ENCODE measurements at regions of chr11 and their contacts with region 1.

Region 1: GRCh38 chr11:72430741-72431570 is 3.4 kb downstream of the CLPB start:
- DNase-seq: peak; percentile 64
- ATAC-seq: peak; percentile 42
- H3K4me3 Mint-ChIP-seq: peak overlapping the region; percentile 14
- H3K27ac Mint-ChIP-seq: peak overlapping the region; percentile 68
- H3K4me1 Mint-ChIP-seq: peaks cover 29% of the 10 kb centered on the region
- H3K27me3 Mint-ChIP-seq: no peaks in the 10 kb centered on the region

Region 2: GRCh38 chr11:71928737-71929452 is 502.1 kb before region 1 on chr11 and contains the start of gene RNF121:
- CTCF ChIA-PET with region 1: interaction called, 4 read pairs
- POLR2A ChIA-PET with region 1: no interaction called
- intact Hi-C with region 1: loop called in 1 of 2 experiments (anchors 1 kb)
- DNase-seq: peak; percentile 99
- ATAC-seq: peak; percentile 87
- H3K4me3 Mint-ChIP-seq: peak within 1 kb of the TSS; percentile 96
- H3K27ac Mint-ChIP-seq: peak within 1 kb of the TSS; percentile 100
- H3K4me1 Mint-ChIP-seq: peaks cover 50% of the 10 kb centered on the region
- H3K27me3 Mint-ChIP-seq: no peaks in the 10 kb centered on the region
- total RNA-seq, gene RNF121: 28.7 to 29.5 TPM

Region 3: DNA sequence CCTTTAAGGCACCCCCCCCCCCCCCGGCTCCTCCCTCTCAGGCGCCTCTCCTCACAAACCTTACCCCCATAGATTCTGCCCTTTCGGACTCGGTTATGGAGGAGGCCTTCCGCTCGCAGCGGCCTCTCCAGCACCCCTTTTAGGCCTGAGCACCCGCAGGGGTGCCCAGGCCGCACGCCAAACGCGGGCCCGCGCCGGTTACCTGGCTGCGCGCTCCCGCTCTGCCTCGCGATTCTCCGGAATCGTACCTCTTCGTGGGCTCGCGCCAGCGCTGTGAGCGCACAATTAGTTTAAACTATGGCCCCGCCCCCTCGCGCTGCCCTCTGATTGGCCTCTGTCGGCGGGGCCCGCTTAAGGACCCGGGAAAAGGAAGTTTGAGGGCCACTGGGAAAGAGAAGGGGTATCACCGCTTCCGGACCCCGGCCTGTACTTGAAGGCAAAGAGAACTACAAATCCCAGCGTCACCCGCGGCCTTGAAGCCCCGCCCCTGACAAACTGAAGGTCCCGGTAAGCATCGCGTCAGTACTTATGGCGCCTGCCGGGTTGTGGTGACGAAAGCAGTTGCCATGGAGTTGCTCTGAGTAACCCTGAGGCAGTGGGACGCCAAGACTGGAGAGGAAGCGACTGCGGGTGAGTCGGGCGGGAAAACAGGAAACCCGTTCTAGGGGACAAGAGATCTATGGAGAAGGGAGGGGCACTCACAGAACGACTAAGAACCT is 350.5 kb before region 1 on chr11 and contains the starts of genes LRRC51 and NUMA1:
- CTCF ChIA-PET with region 1: interaction called, 3 read pairs
- POLR2A ChIA-PET with region 1: no interaction called
- intact Hi-C with region 1: loop called (anchors 1 kb)
- DNase-seq: peak; percentile 100
- ATAC-seq: peak; percentile 96
- H3K4me3 Mint-ChIP-seq: peak within 1 kb of the TSS; percentile 91
- H3K27ac Mint-ChIP-seq: peak within 1 kb of the TSS; percentile 94
- H3K4me1 Mint-ChIP-seq: peaks cover 37% of the 10 kb centered on the region
- H3K27me3 Mint-ChIP-seq: no peaks in the 10 kb centered on the region
- total RNA-seq, gene LRRC51: 7.7 to 11.6 TPM
- total RNA-seq, gene NUMA1: 154 to 167 TPM

Region 4: GRCh38 chr11:72238040-72238450 is 192.9 kb before region 1 on chr11:
- CTCF ChIA-PET with region 1: interaction called, 6 read pairs
- POLR2A ChIA-PET with region 1: no interaction called
- intact Hi-C with region 1: loop called in 1 of 2 experiments (anchors 5 kb)
- DNase-seq: peak; percentile 78
- ATAC-seq: peak; percentile 76
- H3K4me3 Mint-ChIP-seq: no peak overlapping the region
- H3K27ac Mint-ChIP-seq: no peak overlapping the region
- H3K4me1 Mint-ChIP-seq: peaks cover 11% of the 10 kb centered on the region
- H3K27me3 Mint-ChIP-seq: peaks cover 32% of the 10 kb centered on the region

Region 5: GRCh38 chr11:72352859-72353551 is 78.0 kb before region 1 on chr11:
- CTCF ChIA-PET with region 1: interaction called, 12 read pairs
- POLR2A ChIA-PET with region 1: interaction called, 4 read pairs
- intact Hi-C with region 1: loop called (anchors 5 kb)
- DNase-seq: peak; percentile 47
- ATAC-seq: peak; percentile 96
- H3K4me3 Mint-ChIP-seq: no peak overlapping the region
- H3K27ac Mint-ChIP-seq: no peak overlapping the region
- H3K4me1 Mint-ChIP-seq: no peaks in the 10 kb centered on the region
- H3K27me3 Mint-ChIP-seq: no peaks in the 10 kb centered on the region

Region 6: DNA sequence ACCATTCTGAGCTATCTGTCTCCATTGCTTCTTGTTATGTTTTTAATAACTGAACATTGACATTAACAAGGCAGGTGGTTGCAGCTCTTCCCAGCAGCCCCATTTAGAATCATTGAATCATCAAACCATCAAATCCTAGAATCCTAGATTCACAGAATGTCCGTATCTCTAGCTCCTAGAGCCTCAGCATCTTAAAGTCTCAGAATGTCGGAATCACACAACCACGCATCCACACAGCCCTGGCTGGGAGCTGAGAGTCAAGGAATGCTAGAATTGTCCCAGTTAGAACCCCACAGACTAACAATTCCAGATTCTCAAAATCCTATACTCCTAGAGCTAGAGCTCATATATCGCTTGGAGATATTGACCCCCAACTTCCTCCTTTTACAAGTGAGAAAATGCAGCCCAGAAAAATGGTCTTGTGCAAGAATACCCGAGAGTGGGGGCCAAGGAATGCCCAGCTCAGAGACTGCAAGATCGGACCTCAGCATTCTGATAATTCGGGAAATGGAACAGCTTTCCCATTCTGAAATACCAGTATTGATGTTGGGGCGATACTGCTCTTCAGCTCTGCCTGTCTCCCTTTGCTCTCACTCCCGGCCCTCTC is 204.5 kb after region 1 on chr11:
- CTCF ChIA-PET with region 1: no interaction called
- POLR2A ChIA-PET with region 1: no interaction called
- intact Hi-C with region 1: no loop called
- DNase-seq: no peak
- ATAC-seq: no peak
- H3K4me3 Mint-ChIP-seq: no peak overlapping the region
- H3K27ac Mint-ChIP-seq: no peak overlapping the region
- H3K4me1 Mint-ChIP-seq: no peaks in the 10 kb centered on the region
- H3K27me3 Mint-ChIP-seq: peaks cover 2% of the 10 kb centered on the region

Region 7: DNA sequence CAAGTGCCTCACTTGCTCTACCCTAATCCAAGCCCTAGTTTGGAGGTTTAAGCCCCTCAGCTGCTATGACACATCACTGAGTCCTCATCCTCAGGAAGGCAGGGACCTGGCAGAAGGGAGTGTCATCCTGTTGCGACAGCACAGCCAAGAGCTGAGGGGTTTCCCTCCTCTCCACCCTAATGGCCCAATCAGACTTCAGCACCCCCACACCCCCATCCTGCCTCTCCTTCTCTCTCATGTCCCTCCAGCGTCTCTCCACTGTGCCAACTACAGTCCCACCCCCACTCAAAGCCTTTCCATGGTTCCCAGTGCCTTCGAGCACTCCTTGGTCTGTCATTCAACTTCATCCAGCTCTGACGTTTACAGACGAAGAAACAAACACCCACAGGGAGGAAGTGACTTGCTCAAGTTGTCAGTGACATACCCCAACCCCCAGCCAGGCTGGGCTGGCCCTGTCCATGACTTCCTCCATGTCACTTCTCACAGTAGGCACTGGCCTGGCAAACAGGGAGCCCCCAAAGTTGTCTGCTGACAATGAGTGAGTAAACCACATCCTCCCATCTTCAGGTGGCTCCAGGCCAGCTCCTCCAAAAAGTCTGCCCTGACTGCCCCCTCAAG is 305.6 kb after region 1 on chr11:
- CTCF ChIA-PET with region 1: no interaction called
- POLR2A ChIA-PET with region 1: no interaction called
- intact Hi-C with region 1: no loop called
- DNase-seq: peak; percentile 84
- ATAC-seq: peak; percentile 92
- H3K4me3 Mint-ChIP-seq: peak overlapping the region; percentile 54
- H3K27ac Mint-ChIP-seq: peak overlapping the region; percentile 94
- H3K4me1 Mint-ChIP-seq: peaks cover 54% of the 10 kb centered on the region
- H3K27me3 Mint-ChIP-seq: no peaks in the 10 kb centered on the region

Region 8: GRCh38 chr11:72793425-72794367 is 362.7 kb after region 1 on chr11 and contains the start of gene STARD10:
- CTCF ChIA-PET with region 1: interaction called, 3 read pairs
- POLR2A ChIA-PET with region 1: no interaction called
- intact Hi-C with region 1: loop called in 1 of 2 experiments (anchors 1 kb)
- DNase-seq: peak; percentile 97
- ATAC-seq: peak; percentile 93
- H3K4me3 Mint-ChIP-seq: peak within 1 kb of the TSS; percentile 84
- H3K27ac Mint-ChIP-seq: peak within 1 kb of the TSS; percentile 99
- H3K4me1 Mint-ChIP-seq: peaks cover 21% of the 10 kb centered on the region
- H3K27me3 Mint-ChIP-seq: no peaks in the 10 kb centered on the region
- total RNA-seq, gene STARD10: 8.3 to 12.9 TPM